Mammary epithelial cell (primary cell): ENCODE measurements at regions of chr16 and their contacts with region 1.

Region 1: DNA sequence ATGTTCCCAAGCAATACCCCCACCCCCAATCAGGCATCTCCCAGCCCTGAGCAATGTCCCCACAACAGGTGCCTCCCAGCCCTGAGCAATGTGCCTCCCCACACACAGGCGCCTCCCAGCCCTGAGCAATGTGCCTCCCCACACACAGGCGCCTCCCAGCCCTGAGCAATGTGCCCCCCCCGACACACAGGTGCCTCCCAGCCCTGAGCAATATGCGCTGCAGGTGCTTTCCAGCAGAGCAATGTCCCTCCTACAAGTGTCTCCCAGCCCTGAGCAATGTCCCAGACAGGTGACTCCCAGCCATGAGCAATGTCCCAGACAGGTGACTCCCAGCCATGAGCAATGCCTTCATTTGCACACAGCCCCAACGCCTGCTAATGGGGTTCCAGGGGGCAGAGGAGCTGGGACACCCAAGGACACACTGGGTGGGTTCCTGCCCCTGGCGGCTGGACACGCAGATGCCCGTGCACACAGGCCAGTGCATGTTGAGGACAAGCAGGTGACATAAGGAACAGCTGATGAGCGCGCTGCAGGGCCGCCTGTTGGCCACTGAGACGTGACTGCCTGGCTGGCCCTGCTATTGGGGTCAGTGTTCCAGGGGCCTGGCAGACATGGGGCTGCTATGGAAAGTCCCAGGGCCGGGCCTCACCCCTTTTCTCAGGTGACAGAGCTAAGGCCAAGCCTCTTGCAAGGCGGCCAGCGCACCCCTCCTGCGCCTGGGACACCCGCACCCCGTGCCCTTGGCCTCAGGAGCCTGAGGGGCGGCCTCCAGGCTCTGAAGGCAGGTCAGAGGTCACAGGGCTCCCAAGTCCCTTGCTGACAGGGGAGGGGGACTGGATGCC is 26.9 kb upstream of the PABPN1L start:
- DNase-seq: no peak
- H3K4me3 ChIP-seq: no peak overlapping the region
- H3K27ac ChIP-seq: no peak overlapping the region
- H3K4me1 ChIP-seq: no peaks in the 10 kb centered on the region
- H3K27me3 ChIP-seq: no peaks in the 10 kb centered on the region
- CTCF ChIP-seq: no peak

Region 2: DNA sequence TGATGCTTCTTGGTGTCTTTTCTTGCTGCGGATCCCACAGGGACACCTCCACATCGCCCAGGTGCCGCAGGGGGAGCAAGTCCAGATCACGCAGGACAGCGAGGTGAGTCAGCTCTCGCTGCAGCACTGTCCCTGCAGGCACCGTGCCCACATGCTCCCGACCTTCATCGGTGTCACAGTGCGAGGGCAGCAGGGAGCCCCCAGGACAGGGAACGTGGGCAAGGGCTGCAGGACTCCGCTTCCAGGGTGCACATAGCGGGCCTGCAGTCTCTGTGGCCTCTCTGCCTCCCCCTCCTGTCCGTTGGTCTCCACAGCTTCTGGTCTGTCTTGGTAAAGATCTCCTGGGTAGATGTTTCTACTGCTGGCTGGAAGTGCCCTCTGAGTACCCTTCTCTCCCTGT is 858.1 kb before region 1 on chr16:
- CTCF ChIA-PET with region 1: no interaction called
- dilution Hi-C with region 1: no loop called
- in situ Hi-C with region 1: no loop called
- intact Hi-C with region 1: no loop called
- DNase-seq: no peak
- H3K4me3 ChIP-seq: no peak overlapping the region
- H3K27ac ChIP-seq: no peak overlapping the region
- H3K4me1 ChIP-seq: no peaks in the 10 kb centered on the region
- H3K27me3 ChIP-seq: no peaks in the 10 kb centered on the region
- CTCF ChIP-seq: no peak

Region 3: DNA sequence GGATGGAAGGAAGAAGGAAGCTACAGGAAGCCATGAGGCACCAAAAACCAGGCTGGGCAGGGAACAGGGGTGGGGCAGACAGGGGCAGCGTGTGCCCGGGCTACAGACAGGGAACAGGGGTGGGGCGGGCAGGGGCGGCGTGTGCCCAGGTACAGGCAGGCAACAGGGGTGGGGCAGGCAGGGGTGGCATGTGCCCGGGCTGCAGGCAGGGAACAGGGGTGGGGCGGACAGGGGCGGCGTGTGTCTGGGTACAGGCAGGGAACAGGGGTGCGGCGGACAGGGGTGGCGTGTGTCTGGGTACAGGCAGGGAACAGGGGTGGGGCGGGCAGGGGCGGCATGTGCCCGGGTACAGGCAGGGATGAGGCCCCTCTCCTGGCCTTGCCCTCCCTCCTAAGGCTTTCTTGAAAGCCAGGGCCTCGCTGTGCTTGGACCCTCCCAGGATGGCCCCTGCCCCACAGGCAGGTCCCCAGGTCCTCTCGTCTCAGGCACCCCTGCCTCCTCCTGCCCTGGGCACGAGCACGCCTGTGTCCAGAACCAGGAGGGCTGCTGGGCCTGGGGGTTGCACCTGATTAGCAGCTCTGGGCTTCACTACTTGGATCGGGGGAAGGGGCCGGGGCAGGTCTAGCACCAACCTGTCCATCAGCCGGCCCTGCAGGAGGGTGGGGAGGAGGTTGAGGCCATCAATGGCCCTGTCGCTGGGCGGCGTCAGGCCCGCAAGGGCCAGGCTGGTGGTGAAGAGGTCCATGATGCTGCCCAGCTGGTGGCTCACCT is 67.1 kb before region 1 on chr16:
- CTCF ChIA-PET with region 1: no interaction called
- dilution Hi-C with region 1: loop called (anchors 5 kb)
- in situ Hi-C with region 1: no loop called
- intact Hi-C with region 1: no loop called
- DNase-seq: no peak
- H3K4me3 ChIP-seq: no peak overlapping the region
- H3K27ac ChIP-seq: no peak overlapping the region
- H3K4me1 ChIP-seq: no peaks in the 10 kb centered on the region
- H3K27me3 ChIP-seq: no peaks in the 10 kb centered on the region
- CTCF ChIP-seq: no peak

Region 4: GRCh38 chr16:88856828-88857733 is 36.3 kb before region 1 on chr16 and contains the starts of genes GALNS and TRAPPC2L:
- CTCF ChIA-PET with region 1: no interaction called
- dilution Hi-C with region 1: no loop called
- in situ Hi-C with region 1: no loop called
- intact Hi-C with region 1: no loop called
- DNase-seq: peak; percentile 89
- H3K4me3 ChIP-seq: peak within 1 kb of the TSS; percentile 84 to 99 (median 85)
- H3K27ac ChIP-seq: peak within 1 kb of the TSS; percentile 63
- H3K4me1 ChIP-seq: peaks cover 16% of the 10 kb centered on the region
- H3K27me3 ChIP-seq: no peaks in the 10 kb centered on the region
- CTCF ChIP-seq: no peak
- total RNA-seq, gene GALNS: 21.7 to 29.8 TPM
- total RNA-seq, gene TRAPPC2L: 21.5 to 39.9 TPM

Region 5: GRCh38 chr16:88971371-88972097 is 78.2 kb after region 1 on chr16:
- CTCF ChIA-PET with region 1: no interaction called
- dilution Hi-C with region 1: loop called (anchors 5 kb)
- in situ Hi-C with region 1: no loop called
- intact Hi-C with region 1: no loop called
- DNase-seq: no peak
- H3K4me3 ChIP-seq: no peak overlapping the region
- H3K27ac ChIP-seq: no peak overlapping the region
- H3K4me1 ChIP-seq: no peaks in the 10 kb centered on the region
- H3K27me3 ChIP-seq: peaks cover 22% of the 10 kb centered on the region
- CTCF ChIP-seq: no peak